ENCODE measurements at regions of chr14 and their contacts with region 1.

Region 1: DNA sequence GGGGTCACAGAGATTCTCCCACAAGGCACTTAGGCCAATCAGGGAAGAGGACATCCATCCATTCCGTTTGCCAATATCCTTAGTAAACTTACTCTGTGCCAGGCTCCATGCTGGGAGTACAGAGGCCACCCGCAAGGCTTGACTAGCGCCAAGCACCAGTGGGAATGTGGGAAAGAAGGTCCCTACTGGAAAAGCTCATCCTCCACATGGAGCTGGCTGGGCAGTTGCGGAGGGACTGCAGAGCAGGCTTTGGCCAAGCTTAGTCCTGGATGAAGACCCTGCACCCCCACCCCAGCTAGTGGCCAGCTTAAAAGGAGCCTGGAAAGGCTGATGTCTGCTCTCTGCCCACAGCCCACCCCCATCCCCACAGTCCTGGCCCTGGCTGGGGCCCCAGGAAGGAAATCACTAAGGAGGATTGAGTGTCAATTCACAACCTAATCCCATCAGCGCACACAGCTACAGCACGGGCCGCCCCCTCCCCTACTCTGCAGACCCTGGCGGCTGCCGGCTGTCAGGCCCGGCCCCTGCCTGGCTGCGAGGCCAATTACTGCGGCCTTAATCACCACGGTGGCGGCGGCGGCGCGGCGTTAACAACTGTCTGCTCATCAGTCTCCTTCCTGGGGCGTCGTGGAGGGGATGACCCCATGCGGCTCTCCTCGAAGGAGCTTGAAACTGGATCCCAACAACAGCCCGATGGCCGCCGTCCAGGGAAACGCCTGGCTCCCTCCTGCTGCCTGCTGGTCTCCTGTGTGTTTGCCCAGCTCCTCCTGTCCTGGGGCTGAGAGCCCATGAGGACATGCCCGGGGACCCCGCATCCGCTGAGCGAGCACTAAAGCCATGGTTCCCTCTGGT is 22.1 kb upstream of the EIF2B2 start:
- DNase-seq: no peak
- H3K4me3 ChIP-seq: no peak overlapping the region
- H3K27ac ChIP-seq: no peak overlapping the region
- H3K4me1 ChIP-seq: no peaks in the 10 kb centered on the region
- CTCF ChIP-seq: no peak

Region 2: DNA sequence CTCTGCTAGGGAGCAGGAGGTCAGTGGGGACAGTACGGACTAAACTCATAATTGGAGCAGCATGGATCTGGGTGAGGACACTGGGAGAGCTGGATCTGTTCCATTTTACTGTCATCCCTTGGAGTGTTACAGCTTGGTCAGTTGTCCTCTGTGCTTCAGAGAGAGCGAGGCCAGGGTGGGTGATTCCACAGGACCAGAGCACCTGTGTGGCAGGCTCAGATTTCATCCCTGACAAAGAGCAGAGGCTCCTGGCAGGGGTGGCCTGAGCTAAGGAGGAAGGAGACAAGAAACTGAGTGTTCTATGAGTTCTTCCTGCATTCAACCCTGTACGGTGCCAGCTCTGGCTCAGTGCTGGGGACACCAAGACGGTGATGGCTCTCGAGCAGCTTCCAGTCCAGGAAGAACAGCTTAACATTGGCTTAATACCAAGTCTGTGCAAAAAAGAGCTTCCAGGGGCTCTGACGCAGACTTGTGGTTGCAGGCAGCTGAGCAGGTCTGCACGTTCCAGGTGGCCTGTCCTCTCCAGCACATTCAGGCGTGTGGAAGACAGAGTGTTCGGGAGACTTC is 16.8 kb before region 1 on chr14:
- CTCF ChIA-PET with region 1: interaction called, 14 read pairs
- POLR2A ChIA-PET with region 1: interaction called, 3 read pairs
- intact Hi-C with region 1: no loop called
- DNase-seq: no peak
- H3K4me3 ChIP-seq: no peak overlapping the region
- H3K27ac ChIP-seq: no peak overlapping the region
- H3K4me1 ChIP-seq: peaks cover 21% of the 10 kb centered on the region
- CTCF ChIP-seq: no peak

Region 3: GRCh38 chr14:75427482-75428229 is 447.1 kb after region 1 on chr14 and contains the start of gene JDP2:
- CTCF ChIA-PET with region 1: interaction called, 17 read pairs
- POLR2A ChIA-PET with region 1: no interaction called
- intact Hi-C with region 1: no loop called
- DNase-seq: peak; percentile 80
- H3K4me3 ChIP-seq: peak within 1 kb of the TSS; percentile 90
- H3K27ac ChIP-seq: peak within 1 kb of the TSS; percentile 77
- H3K4me1 ChIP-seq: peaks cover 46% of the 10 kb centered on the region
- CTCF ChIP-seq: peak; percentile 33; the same call in 1 of the 2 replicates
- total RNA-seq, gene JDP2: 53.7 and 62.7 TPM in 2 replicates